A673 (cell line): ENCODE measurements at regions of chr2 and their contacts with region 1.

Region 1: GRCh38 chr2:10900216-10901109 is 11.3 kb upstream of the KCNF1 start:
- DNase-seq: peak; percentile 75
- H3K4me3 ChIP-seq: no peak overlapping the region
- H3K27ac ChIP-seq: no peak overlapping the region
- H3K4me1 ChIP-seq: no peaks in the 10 kb centered on the region
- H3K27me3 ChIP-seq: no peaks in the 10 kb centered on the region
- CTCF ChIP-seq: peak; percentile 64

Region 2: GRCh38 chr2:10883801-10884478 is 16.5 kb before region 1 on chr2:
- CTCF ChIA-PET with region 1: interaction called, 3 read pairs
- POLR2A ChIA-PET with region 1: no interaction called
- intact Hi-C with region 1: loop called (anchors 2 kb)
- DNase-seq: no peak
- H3K4me3 ChIP-seq: peak overlapping the region; percentile 14
- H3K27ac ChIP-seq: peak overlapping the region; percentile 73
- H3K4me1 ChIP-seq: peaks cover 50% of the 10 kb centered on the region
- H3K27me3 ChIP-seq: no peaks in the 10 kb centered on the region
- CTCF ChIP-seq: no peak

Region 3: GRCh38 chr2:11004199-11004598 is 103.7 kb after region 1 on chr2:
- CTCF ChIA-PET with region 1: no interaction called
- POLR2A ChIA-PET with region 1: no interaction called
- intact Hi-C with region 1: no loop called
- DNase-seq: peak; percentile 66
- H3K4me3 ChIP-seq: no peak overlapping the region
- H3K27ac ChIP-seq: no peak overlapping the region
- H3K4me1 ChIP-seq: peaks cover 6% of the 10 kb centered on the region
- H3K27me3 ChIP-seq: no peaks in the 10 kb centered on the region
- CTCF ChIP-seq: no peak

Region 4: GRCh38 chr2:11050565-11050964 is 150.1 kb after region 1 on chr2:
- CTCF ChIA-PET with region 1: no interaction called
- POLR2A ChIA-PET with region 1: interaction called, 14 read pairs
- intact Hi-C with region 1: no loop called
- DNase-seq: no peak
- H3K4me3 ChIP-seq: no peak overlapping the region
- H3K27ac ChIP-seq: no peak overlapping the region
- H3K4me1 ChIP-seq: no peaks in the 10 kb centered on the region
- H3K27me3 ChIP-seq: no peaks in the 10 kb centered on the region
- CTCF ChIP-seq: no peak

Region 5: DNA sequence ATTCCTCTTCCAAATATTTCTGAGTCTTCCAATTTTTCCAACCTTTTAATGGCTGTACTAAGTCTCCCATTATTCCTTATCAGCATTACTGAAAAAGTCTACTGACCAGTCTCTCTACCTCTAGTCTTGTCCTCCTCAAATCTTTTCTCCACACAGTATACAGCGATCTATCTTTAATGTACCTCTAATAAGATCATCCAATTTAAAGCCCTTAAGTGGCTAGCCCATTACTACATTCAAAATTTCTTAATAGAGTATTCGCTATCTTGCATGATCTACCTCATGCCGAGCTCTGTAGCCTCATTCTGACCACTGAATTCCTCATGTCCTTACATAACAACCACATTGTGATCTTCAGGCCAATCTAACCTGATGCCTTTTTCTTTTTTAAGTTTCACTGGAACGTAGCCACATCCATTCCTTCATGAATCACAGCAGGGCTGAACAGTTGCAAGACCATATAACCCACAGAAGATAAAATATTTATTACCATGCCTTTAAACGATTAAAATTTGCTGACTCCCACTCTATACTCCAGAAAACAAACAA is 312.7 kb after region 1 on chr2:
- CTCF ChIA-PET with region 1: no interaction called
- POLR2A ChIA-PET with region 1: no interaction called
- intact Hi-C with region 1: no loop called
- DNase-seq: no peak
- H3K4me3 ChIP-seq: no peak overlapping the region
- H3K27ac ChIP-seq: no peak overlapping the region
- H3K4me1 ChIP-seq: no peaks in the 10 kb centered on the region
- H3K27me3 ChIP-seq: no peaks in the 10 kb centered on the region
- CTCF ChIP-seq: no peak